ENCODE measurements at regions of chr3 and their contacts with region 1.

Region 1: GRCh38 chr3:153096611-153097202 is 65.3 kb upstream of the RAP2B start:
- DNase-seq: no peak
- ATAC-seq: no peak
- H3K4me3 ChIP-seq: no peak overlapping the region
- H3K27ac ChIP-seq: no peak overlapping the region
- H3K4me1 ChIP-seq: no peaks in the 10 kb centered on the region
- H3K27me3 ChIP-seq: no peaks in the 10 kb centered on the region
- CTCF ChIP-seq: no peak

Region 2: GRCh38 chr3:152885076-152885475 is 211.6 kb before region 1 on chr3:
- CTCF ChIA-PET with region 1: no interaction called
- POLR2A ChIA-PET with region 1: no interaction called
- in situ Hi-C with region 1: no loop called
- intact Hi-C with region 1: no loop called
- DNase-seq: no peak
- ATAC-seq: no peak
- H3K4me3 ChIP-seq: no peak overlapping the region
- H3K27ac ChIP-seq: no peak overlapping the region
- H3K4me1 ChIP-seq: no peaks in the 10 kb centered on the region
- H3K27me3 ChIP-seq: no peaks in the 10 kb centered on the region
- CTCF ChIP-seq: no peak

Region 3: GRCh38 chr3:153069598-153070510 is 26.9 kb before region 1 on chr3:
- CTCF ChIA-PET with region 1: interaction called, 11 read pairs
- POLR2A ChIA-PET with region 1: no interaction called
- in situ Hi-C with region 1: no loop called
- intact Hi-C with region 1: no loop called
- DNase-seq: no peak
- ATAC-seq: no peak
- H3K4me3 ChIP-seq: no peak overlapping the region
- H3K27ac ChIP-seq: no peak overlapping the region
- H3K4me1 ChIP-seq: no peaks in the 10 kb centered on the region
- H3K27me3 ChIP-seq: no peaks in the 10 kb centered on the region
- CTCF ChIP-seq: no peak

Region 4: DNA sequence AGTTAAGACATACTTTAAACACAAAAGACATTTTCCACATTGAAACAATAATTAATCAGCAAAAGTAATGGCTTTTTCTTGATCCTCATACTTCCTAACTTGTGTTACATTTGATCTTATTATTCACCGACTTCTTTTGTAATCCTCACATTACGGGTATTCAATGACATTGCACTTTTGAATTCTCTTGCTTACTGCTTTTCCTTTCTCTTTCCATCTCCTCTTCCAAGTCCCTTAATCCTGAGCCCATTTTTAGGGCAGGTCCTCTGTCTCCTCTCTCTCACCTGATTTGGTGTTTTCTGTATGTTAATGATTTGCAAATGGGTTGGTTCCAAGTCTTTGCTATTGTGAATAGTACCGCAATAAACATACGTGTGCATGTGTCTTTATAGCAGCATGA is 16.8 kb after region 1 on chr3:
- CTCF ChIA-PET with region 1: no interaction called
- POLR2A ChIA-PET with region 1: no interaction called
- in situ Hi-C with region 1: no loop called
- intact Hi-C with region 1: loop called (anchors 1 kb)
- DNase-seq: no peak
- ATAC-seq: no peak
- H3K4me3 ChIP-seq: no peak overlapping the region
- H3K27ac ChIP-seq: no peak overlapping the region
- H3K4me1 ChIP-seq: no peaks in the 10 kb centered on the region
- H3K27me3 ChIP-seq: no peaks in the 10 kb centered on the region
- CTCF ChIP-seq: no peak